ENCODE measurements at regions of chr9 and their contacts with region 1.

Region 1: GRCh38 chr9:110785166-110785565 is 116.6 kb downstream of the MUSK start:
- DNase-seq: no peak
- H3K4me3 ChIP-seq: no peak overlapping the region
- H3K27ac ChIP-seq: no peak overlapping the region
- H3K27me3 ChIP-seq: no peaks in the 10 kb centered on the region
- CTCF ChIP-seq: no peak

Region 2: GRCh38 chr9:110728058-110728457 is 57.1 kb before region 1 on chr9:
- CTCF ChIA-PET with region 1: no interaction called
- POLR2A ChIA-PET with region 1: no interaction called
- DNase-seq: no peak
- H3K4me3 ChIP-seq: no peak overlapping the region
- H3K27ac ChIP-seq: no peak overlapping the region
- H3K27me3 ChIP-seq: no peaks in the 10 kb centered on the region
- CTCF ChIP-seq: no peak

Region 3: GRCh38 chr9:111131211-111131610 is 346.0 kb after region 1 on chr9:
- CTCF ChIA-PET with region 1: no interaction called
- POLR2A ChIA-PET with region 1: interaction called, 10 read pairs
- DNase-seq: no peak
- H3K4me3 ChIP-seq: no peak overlapping the region
- H3K27ac ChIP-seq: no peak overlapping the region
- H3K27me3 ChIP-seq: no peaks in the 10 kb centered on the region
- CTCF ChIP-seq: no peak